ENCODE measurements at regions of chr22 and their contacts with region 1.

Region 1: DNA sequence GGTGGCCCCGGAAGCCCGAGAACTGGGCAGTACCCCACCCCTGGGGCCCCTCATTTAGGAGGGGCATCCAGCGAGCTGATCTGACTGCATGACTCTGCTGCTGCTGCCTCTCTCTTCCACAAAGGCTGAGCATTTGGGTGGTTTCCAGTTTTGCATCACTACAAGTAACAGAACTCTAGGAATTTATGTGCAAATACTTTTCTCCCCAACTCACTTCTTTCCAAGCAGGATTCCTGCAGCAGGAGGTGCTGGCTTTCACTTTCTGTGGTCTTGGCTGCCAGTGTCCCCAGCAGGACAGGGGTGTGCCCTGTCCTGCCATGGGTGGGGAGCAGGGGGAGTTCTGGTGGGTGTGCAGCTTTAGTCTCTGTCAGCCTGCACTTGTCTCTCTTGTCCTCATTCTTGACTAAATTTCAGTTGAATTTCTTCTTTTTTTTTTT is 21.2 kb downstream of the UPB1 start:
- DNase-seq: no peak
- ATAC-seq: no peak
- H3K4me3 ChIP-seq: no peak overlapping the region
- H3K27ac ChIP-seq: no peak overlapping the region
- H3K4me1 ChIP-seq: peaks cover 0 to 34% (median 16%) of the 10 kb centered on the region in 9 donors
- H3K27me3 ChIP-seq: no peaks in the 10 kb centered on the region
- CTCF ChIP-seq: no peak

Region 2: GRCh38 chr22:24265734-24266133 is 250.6 kb before region 1 on chr22:
- intact Hi-C with region 1: loop called in 1 of 10 experiments (anchors 10 kb)
- DNase-seq: no peak
- ATAC-seq: no peak
- H3K4me3 ChIP-seq: no peak overlapping the region
- H3K27ac ChIP-seq: no peak overlapping the region
- H3K4me1 ChIP-seq: peaks cover 0 to 8% (median 5%) of the 10 kb centered on the region in 9 donors
- H3K27me3 ChIP-seq: no peaks in the 10 kb centered on the region
- CTCF ChIP-seq: no peak